Activated B cell treated with CpG ODN at 0.5 μM for 24 hours (primary cell): ENCODE measurements at regions of chr2 and their contacts with region 1.

Region 1: GRCh38 chr2:28566521-28567041 is 70.7 kb downstream of the PLB1 start:
- DNase-seq: peak; percentile 85
- ATAC-seq: peak; percentile 99
- H3K4me3 Mint-ChIP-seq: peak overlapping the region; percentile 93
- H3K27ac Mint-ChIP-seq: peak overlapping the region; percentile 76
- H3K4me1 Mint-ChIP-seq: peaks cover 12% of the 10 kb centered on the region
- H3K27me3 Mint-ChIP-seq: peaks cover 8% of the 10 kb centered on the region
- CTCF ChIP-seq: peak; percentile 23

Region 2: GRCh38 chr2:27703638-27704341 is 862.8 kb before region 1 on chr2:
- CTCF ChIA-PET with region 1: no interaction called
- POLR2A ChIA-PET with region 1: no interaction called
- intact Hi-C with region 1: loop called (anchors 5 kb)
- DNase-seq: peak; percentile 55
- ATAC-seq: peak; percentile 79
- H3K4me3 Mint-ChIP-seq: no peak overlapping the region
- H3K27ac Mint-ChIP-seq: no peak overlapping the region
- H3K4me1 Mint-ChIP-seq: peaks cover 3% of the 10 kb centered on the region
- H3K27me3 Mint-ChIP-seq: peaks cover 9% of the 10 kb centered on the region
- CTCF ChIP-seq: peak; percentile 75

Region 3: GRCh38 chr2:28300485-28301341 is 265.9 kb before region 1 on chr2:
- CTCF ChIA-PET with region 1: no interaction called
- POLR2A ChIA-PET with region 1: no interaction called
- intact Hi-C with region 1: no loop called
- DNase-seq: no peak
- ATAC-seq: no peak
- H3K4me3 Mint-ChIP-seq: no peak overlapping the region
- H3K27ac Mint-ChIP-seq: no peak overlapping the region
- H3K4me1 Mint-ChIP-seq: no peaks in the 10 kb centered on the region
- H3K27me3 Mint-ChIP-seq: no peaks in the 10 kb centered on the region
- CTCF ChIP-seq: no peak

Region 4: DNA sequence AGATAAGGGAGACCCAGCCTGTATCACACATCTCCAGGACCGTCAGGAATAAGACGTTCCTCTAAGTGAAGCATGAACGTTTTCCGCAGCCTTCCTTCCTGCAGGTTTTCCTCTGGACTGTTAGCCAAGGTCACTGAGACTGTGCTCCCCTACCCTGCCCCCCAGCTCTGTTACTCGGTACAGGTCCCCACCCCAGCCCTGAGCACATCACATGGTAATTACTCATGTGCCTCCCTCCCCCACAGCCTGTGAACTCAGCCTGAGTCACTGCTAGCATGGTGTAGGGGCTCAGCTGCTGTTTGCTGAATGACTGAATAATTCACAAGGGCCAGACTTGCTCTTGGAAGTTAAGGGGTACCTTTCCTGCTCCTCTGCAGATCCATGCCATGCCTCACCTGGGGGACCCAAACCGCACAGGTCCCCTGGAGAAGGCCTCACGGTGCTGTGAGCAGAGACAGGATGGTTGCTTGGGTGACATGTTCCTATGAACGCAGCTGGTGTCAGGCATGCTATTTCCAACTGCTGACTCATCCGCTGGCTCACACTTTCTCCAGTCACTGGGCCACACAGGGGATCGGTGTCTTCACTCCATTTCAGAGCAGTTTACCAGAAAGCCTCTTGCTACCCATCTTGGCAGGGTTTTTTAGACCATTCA is 17.4 kb after region 1 on chr2:
- CTCF ChIA-PET with region 1: no interaction called
- POLR2A ChIA-PET with region 1: no interaction called
- intact Hi-C with region 1: no loop called
- DNase-seq: no peak
- ATAC-seq: peak; percentile 64
- H3K4me3 Mint-ChIP-seq: no peak overlapping the region
- H3K27ac Mint-ChIP-seq: no peak overlapping the region
- H3K4me1 Mint-ChIP-seq: no peaks in the 10 kb centered on the region
- H3K27me3 Mint-ChIP-seq: peaks cover 4% of the 10 kb centered on the region
- CTCF ChIP-seq: no peak

Region 5: GRCh38 chr2:30072250-30072842 is 1505.8 kb after region 1 on chr2:
- CTCF ChIA-PET with region 1: no interaction called
- POLR2A ChIA-PET with region 1: no interaction called
- intact Hi-C with region 1: loop called (anchors 5 kb)
- DNase-seq: no peak
- ATAC-seq: no peak
- H3K4me3 Mint-ChIP-seq: no peak overlapping the region
- H3K27ac Mint-ChIP-seq: no peak overlapping the region
- H3K4me1 Mint-ChIP-seq: no peaks in the 10 kb centered on the region
- H3K27me3 Mint-ChIP-seq: peaks cover 14% of the 10 kb centered on the region
- CTCF ChIP-seq: no peak